Dorsolateral prefrontal cortex (tissue), 120 donors: ENCODE measurements at regions of chr2 and their contacts with region 1.

Region 1: DNA sequence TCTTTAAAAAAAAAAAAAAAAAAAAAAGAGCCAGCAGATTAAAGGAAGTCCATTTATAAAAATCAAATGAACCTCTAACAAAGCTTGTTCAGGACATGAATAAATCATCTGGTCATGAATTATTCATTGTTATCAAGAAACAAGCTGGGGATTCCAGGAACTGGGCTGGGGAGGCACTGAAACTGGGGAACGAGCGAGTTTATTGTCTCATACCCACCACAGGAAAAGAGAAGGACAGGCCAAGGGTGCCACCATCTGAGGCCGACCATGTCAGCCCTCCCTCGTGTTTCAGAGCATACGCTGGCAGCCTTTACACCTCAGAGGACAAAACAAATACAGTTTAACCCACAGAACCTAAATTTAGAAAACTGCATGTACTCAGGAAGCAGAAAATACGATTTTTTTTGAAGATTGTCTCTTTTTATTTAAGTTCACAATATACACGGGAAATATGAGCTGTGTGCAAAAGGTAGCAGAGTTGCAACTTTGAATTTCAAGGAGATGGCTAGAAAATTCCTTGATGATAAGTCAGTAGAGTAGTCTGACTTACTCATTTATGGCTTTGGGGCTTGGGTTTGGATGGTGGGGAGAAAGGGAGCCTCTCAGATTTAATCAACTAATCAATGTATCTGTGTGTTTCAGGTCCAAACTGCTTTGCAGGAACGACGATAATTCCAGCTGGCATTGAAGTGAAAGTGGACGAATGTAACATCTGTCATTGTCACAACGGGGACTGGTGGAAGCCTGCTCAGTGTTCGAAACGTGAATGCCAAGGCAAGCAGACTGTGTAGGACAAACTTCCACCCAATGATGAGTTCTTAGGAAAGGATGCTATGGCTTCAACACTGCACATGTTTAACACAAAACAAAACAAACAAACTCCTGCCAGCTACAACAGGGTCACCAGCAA is 164.4 kb downstream of the VWC2L start:
- DNase-seq: peak; percentile 20 to 89 (median 82)
- H3K4me3 ChIP-seq: peak overlapping the region in 51 of 59 donors; percentile 4 to 55 (median 30)
- H3K27ac ChIP-seq: peak overlapping the region in 54 of 59 donors; percentile 2 to 86 (median 60)
- H3K27me3 ChIP-seq: no peaks in the 10 kb centered on the region
- CTCF ChIP-seq: peak in 50 of 56 donors; percentile 13 to 63 (median 40)

Region 2: DNA sequence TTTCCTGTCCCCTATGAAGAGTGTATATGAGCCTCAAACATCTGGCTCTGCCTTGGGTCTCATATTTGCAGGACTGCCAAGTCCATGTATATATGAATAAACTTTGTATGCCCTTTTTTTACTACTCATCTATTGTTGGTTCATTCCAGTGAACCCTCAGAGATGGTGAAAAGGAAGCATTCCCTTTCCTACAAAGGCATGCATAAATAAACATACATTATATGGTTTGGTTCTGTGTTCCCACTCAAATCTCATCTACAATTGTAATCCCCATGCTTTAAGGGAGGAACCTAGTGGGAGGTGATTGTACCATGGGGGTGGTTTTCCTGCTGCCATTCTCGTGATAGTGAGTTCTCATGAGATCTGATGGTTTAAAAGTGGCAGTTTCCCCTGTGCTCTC is 756.8 kb before region 1 on chr2:
- intact Hi-C with region 1: loop called in 1 of 2 experiments (anchors 10 kb)
- DNase-seq: no peak
- H3K4me3 ChIP-seq: no peak overlapping the region
- H3K27ac ChIP-seq: no peak overlapping the region
- H3K27me3 ChIP-seq: no peaks in the 10 kb centered on the region
- CTCF ChIP-seq: no peak

Region 3: DNA sequence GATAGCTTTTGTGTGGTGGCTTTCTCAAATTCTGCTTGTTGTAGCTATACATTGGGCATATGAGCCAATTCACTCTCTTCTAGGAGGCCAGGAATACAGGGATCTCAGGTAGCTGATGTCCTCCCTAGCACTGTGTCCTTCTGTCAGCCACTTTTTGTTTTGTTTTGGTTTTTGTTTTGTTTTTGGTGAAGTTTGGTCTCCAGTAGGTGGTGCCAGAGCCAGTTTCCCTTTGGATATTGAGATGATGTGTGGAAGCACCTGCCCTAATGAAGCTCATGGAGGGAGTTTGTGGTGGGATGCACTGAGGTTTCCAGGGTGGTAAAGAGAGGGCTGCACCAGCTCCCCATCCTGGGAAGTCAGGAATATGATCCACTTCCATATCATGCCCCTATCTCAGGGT is 265.0 kb before region 1 on chr2:
- intact Hi-C with region 1: loop called in 1 of 2 experiments (anchors 10 kb)
- DNase-seq: no peak
- H3K4me3 ChIP-seq: no peak overlapping the region
- H3K27ac ChIP-seq: no peak overlapping the region
- H3K27me3 ChIP-seq: no peaks in the 10 kb centered on the region
- CTCF ChIP-seq: peak in 40 of 56 donors; percentile 9 to 63 (median 32)

Region 4: GRCh38 chr2:214328941-214329340 is 246.3 kb before region 1 on chr2:
- intact Hi-C with region 1: loop called in 1 of 2 experiments (anchors 10 kb)
- DNase-seq: peak in 9 of 10 donors; percentile 4 to 85 (median 73)
- H3K4me3 ChIP-seq: peak overlapping the region in 4 of 59 donors; percentile 5 to 24 (median 12)
- H3K27ac ChIP-seq: peak overlapping the region; percentile 80 to 100 (median 96)
- H3K27me3 ChIP-seq: no peaks in the 10 kb centered on the region
- CTCF ChIP-seq: peak in 3 of 56 donors; percentile 12 to 15 (median 13)

Region 5: GRCh38 chr2:214410918-214411554 is 164.2 kb before region 1 on chr2 and contains the start of gene VWC2L:
- intact Hi-C with region 1: loop called in 1 of 2 experiments (anchors 5 kb)
- DNase-seq: peak; percentile 34 to 88 (median 84)
- H3K4me3 ChIP-seq: peak within 1 kb of the TSS in 58 of 59 donors; percentile 14 to 68 (median 48)
- H3K27ac ChIP-seq: peak within 1 kb of the TSS in 45 of 59 donors; percentile 1 to 76 (median 46)
- H3K27me3 ChIP-seq: no peaks in the 10 kb centered on the region
- CTCF ChIP-seq: peak in 27 of 56 donors; percentile 2 to 51 (median 20)
- total RNA-seq, gene VWC2L: 2.7 to 14.0 (median 7.4) TPM

Region 6: GRCh38 chr2:214489181-214489580 is 86.1 kb before region 1 on chr2:
- intact Hi-C with region 1: loop called in 1 of 2 experiments (anchors 5 kb)
- DNase-seq: no peak
- H3K4me3 ChIP-seq: no peak overlapping the region
- H3K27ac ChIP-seq: peak overlapping the region in 4 of 59 donors; percentile 16 to 57 (median 18)
- H3K27me3 ChIP-seq: no peaks in the 10 kb centered on the region
- CTCF ChIP-seq: no peak